HEK293 (cell line): ENCODE measurements at regions of chr17 and their contacts with region 1.

Region 1: GRCh38 chr17:45852535-45853297 is 8.0 kb downstream of the SPPL2C start:
- H3K4me3 ChIP-seq: no peak overlapping the region
- H3K27ac ChIP-seq: no peak overlapping the region
- H3K4me1 ChIP-seq: no peaks in the 10 kb centered on the region
- CTCF ChIP-seq: peak; percentile 67

Region 2: GRCh38 chr17:45428050-45428617 is 424.6 kb before region 1 on chr17:
- CTCF ChIA-PET with region 1: interaction called, 20 read pairs
- POLR2A ChIA-PET with region 1: no interaction called
- H3K4me3 ChIP-seq: no peak overlapping the region
- H3K27ac ChIP-seq: no peak overlapping the region
- H3K4me1 ChIP-seq: peaks cover 15% of the 10 kb centered on the region
- CTCF ChIP-seq: peak; percentile 91

Region 3: DNA sequence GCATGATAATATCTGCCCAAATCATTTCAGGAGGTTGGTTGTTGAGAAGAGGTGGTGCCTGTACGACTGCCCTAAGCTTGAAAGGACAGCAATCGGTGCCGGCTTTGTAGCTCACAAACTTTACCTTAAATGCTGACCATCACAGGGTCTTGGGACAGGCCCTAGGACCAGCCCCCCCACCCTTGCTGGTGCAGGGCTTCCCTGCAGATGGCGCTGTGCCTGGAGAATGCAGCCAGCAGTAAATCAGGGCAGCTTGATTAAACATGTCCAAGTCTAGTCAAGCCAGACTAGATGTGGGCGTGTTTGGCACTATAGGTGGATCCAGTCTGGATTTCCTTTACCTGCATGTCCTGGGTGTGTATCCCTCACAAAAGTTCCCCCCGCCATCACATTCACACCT is 204.1 kb before region 1 on chr17:
- CTCF ChIA-PET with region 1: interaction called, 14 read pairs
- POLR2A ChIA-PET with region 1: no interaction called
- H3K4me3 ChIP-seq: no peak overlapping the region
- H3K27ac ChIP-seq: no peak overlapping the region
- H3K4me1 ChIP-seq: no peaks in the 10 kb centered on the region
- CTCF ChIP-seq: no peak

Region 4: DNA sequence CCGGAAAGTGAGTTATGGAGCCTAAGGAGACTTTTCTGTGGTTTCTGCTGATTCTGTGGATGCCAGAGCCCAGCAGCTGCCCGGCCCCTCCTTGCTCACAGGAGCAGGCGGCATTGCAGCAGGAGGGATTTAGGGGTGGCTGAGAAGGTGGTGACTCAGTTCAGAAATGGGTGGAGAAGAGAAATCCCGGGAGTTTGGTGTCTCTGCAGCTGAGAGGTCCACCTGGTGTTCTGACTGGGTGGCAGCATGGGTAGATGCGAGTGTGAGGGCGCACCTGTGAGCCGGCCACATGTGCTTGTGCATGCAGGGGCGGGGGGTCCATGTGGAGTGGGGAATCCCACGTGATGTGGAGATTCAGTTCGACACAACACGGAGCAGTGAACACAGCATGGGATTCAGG is 24.1 kb before region 1 on chr17:
- CTCF ChIA-PET with region 1: interaction called, 28 read pairs
- POLR2A ChIA-PET with region 1: no interaction called
- H3K4me3 ChIP-seq: no peak overlapping the region
- H3K27ac ChIP-seq: no peak overlapping the region
- H3K4me1 ChIP-seq: no peaks in the 10 kb centered on the region
- CTCF ChIP-seq: no peak

Region 5: GRCh38 chr17:45948881-45949624 is 96.3 kb after region 1 on chr17:
- CTCF ChIA-PET with region 1: interaction called, 13 read pairs
- POLR2A ChIA-PET with region 1: no interaction called
- H3K4me3 ChIP-seq: no peak overlapping the region; the same call in 1 of the 2 replicates
- H3K27ac ChIP-seq: no peak overlapping the region
- H3K4me1 ChIP-seq: no peaks in the 10 kb centered on the region
- CTCF ChIP-seq: peak; percentile 75